Uterus (tissue), 4 donors: ENCODE measurements at regions of chr9 and their contacts with region 1.

Region 1: DNA sequence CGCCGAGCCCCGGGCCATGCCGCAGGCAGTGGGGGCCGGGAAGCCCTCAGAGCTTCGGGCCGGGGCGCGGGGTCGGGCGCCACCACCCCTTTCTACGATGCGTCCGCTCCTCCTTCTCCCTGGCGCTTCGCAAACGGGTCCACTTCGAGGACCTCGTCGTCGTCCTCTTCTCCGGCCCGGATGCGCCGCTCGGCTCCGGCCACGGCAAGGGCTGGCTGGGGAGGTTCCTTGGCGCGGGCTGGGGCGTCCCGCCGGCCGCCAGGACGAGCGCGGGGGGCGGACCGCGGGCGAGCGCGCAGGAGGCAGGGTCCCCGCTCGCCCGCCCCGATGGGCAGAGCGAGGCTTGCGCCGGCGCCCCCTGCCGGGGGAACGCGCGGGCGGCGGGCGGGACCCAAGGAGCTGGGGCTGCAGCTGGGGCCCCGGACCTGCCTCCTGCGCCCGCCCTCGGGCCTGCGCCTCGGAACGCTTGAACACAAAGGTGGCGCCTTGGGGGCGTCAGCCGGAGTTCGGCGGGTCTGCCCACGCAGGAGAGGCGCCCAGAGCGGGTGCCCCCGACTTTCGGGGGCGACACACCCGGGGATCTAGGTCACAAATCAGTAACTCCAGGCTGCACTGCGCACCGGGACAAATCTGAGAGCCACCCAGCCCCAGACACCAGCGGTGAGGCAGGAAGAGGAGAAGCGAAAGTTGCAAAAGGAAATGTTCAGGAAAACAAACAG is at the start of gene ROR2:
- DNase-seq: peak; percentile 74 to 83
- H3K4me3 ChIP-seq: peak within 1 kb of the TSS; percentile 66 to 85
- H3K27ac ChIP-seq: peak within 1 kb of the TSS; percentile 89 to 90
- H3K4me1 ChIP-seq: peaks cover 0 to 6% of the 10 kb centered on the region in 2 donors
- H3K27me3 ChIP-seq: no peaks in the 10 kb centered on the region
- CTCF ChIP-seq: peak in 3 of 4 experiments; percentile 86 to 96 (median 91)
- POLR2A ChIP-seq: peak; percentile 59 to 78
- total RNA-seq, gene ROR2: 35.6 to 67.6 (median 50.6) TPM

Region 2: GRCh38 chr9:91775011-91775707 is 174.9 kb before region 1 on chr9:
- intact Hi-C with region 1: loop called (anchors 5 kb)
- DNase-seq: peak; percentile 68 to 74
- H3K4me3 ChIP-seq: no peak overlapping the region
- H3K27ac ChIP-seq: no peak overlapping the region
- H3K4me1 ChIP-seq: peaks cover 0 to 5% of the 10 kb centered on the region in 2 donors
- H3K27me3 ChIP-seq: no peaks in the 10 kb centered on the region
- CTCF ChIP-seq: peak; percentile 73 to 91 (median 82)
- POLR2A ChIP-seq: no peak

Region 3: DNA sequence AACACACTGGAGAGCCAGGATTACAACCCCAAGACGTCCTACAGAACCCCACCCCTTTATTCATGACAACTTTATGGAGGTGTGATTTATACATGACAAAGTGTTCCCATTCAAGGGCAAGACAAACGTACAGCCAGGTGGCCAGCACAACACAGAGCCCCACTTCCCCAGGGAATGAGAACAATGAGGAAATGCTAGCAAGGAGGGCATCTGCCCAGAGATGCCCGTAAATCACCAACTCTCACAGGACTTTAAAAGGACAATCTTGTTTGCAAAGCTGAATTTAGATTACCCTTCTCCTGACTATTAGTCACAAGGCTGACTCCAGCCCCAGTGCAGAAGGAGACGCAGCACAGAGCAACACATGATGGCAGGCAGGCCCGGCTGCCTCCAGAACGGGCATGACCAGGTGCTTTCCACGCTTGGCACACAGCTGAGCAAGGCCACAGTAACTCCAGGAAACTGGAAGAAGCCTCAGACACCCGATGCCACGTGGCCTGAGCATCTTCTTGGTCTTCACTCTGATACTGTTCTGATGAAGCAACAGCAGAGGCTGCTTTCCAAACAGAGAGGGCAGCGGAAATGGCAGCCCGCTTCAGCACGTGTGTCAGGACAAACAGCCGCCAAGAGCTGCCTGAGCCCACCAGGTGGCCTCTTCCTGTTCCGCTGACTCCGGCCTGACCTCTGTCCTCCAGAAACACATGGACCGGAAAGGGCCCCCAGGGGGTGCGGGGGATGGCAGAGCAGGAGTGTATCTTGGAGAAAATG is 51.5 kb before region 1 on chr9:
- intact Hi-C with region 1: loop called (anchors 10 kb)
- DNase-seq: peak; percentile 54 to 67
- H3K4me3 ChIP-seq: no peak overlapping the region
- H3K27ac ChIP-seq: peak overlapping the region; percentile 80 to 89
- H3K4me1 ChIP-seq: peaks cover 27 to 45% of the 10 kb centered on the region in 2 donors
- H3K27me3 ChIP-seq: no peaks in the 10 kb centered on the region
- CTCF ChIP-seq: no peak
- POLR2A ChIP-seq: peak in 1 of 2 donors; percentile 23